GM12878 (cell line): ENCODE measurements at regions of chr11 and their contacts with region 1.

Region 1: GRCh38 chr11:43282607-43283440 is 29.0 kb upstream of the API5 start:
- DNase-seq: no peak
- ATAC-seq: peak; percentile 89
- H3K4me3 ChIP-seq: no peak overlapping the region
- H3K27ac ChIP-seq: no peak overlapping the region
- H3K4me1 ChIP-seq: no peaks in the 10 kb centered on the region
- H3K27me3 ChIP-seq: no peaks in the 10 kb centered on the region; a peak in 1 of 4 replicates
- CTCF ChIP-seq: peak; percentile 79 to 84 (median 84)
- EP300 ChIP-seq: no peak
- POLR2A ChIP-seq: no peak
- RAD21 ChIP-seq: peak; percentile 78

Region 2: GRCh38 chr11:42524534-42525227 is 758.1 kb before region 1 on chr11:
- CTCF ChIA-PET with region 1: interaction called, 11 read pairs
- POLR2A ChIA-PET with region 1: no interaction called
- RAD21 ChIA-PET with region 1: interaction called, 7 read pairs
- SMC1A ChIA-PET with region 1: interaction called, 6 read pairs
- in situ Hi-C with region 1: no loop called
- intact Hi-C with region 1: loop called (anchors 5 kb)
- DNase-seq: peak; percentile 5
- ATAC-seq: peak; percentile 96
- H3K4me3 ChIP-seq: no peak overlapping the region
- H3K27ac ChIP-seq: no peak overlapping the region
- H3K4me1 ChIP-seq: no peaks in the 10 kb centered on the region
- H3K27me3 ChIP-seq: no peaks in the 10 kb centered on the region
- CTCF ChIP-seq: peak; percentile 72 to 85 (median 77)
- EP300 ChIP-seq: no peak
- POLR2A ChIP-seq: no peak
- RAD21 ChIP-seq: peak; percentile 89

Region 3: DNA sequence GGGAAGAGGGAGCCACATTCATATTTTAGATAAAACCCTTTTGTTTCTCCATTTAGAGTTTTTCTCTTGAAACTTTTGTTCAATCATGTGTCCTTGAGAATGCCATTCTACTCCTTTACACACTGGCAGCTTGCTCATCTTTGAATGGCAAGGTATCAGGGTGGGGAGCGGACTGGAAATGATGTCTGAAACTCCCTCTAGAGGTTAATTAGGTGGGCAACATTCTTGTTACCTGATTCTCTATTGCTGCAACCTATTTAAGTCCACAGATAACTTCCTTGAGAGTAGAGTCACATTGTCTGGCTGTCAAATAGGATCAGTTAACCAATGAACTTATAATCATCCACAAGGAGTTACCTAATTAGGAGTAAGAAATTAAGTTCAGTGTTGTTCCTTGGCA is 504.6 kb before region 1 on chr11:
- CTCF ChIA-PET with region 1: interaction called, 15 read pairs
- POLR2A ChIA-PET with region 1: no interaction called
- RAD21 ChIA-PET with region 1: interaction called, 3 read pairs
- SMC1A ChIA-PET with region 1: interaction called, 5 read pairs
- in situ Hi-C with region 1: loop called (anchors 5 kb)
- intact Hi-C with region 1: no loop called
- DNase-seq: no peak
- ATAC-seq: no peak
- H3K4me3 ChIP-seq: no peak overlapping the region
- H3K27ac ChIP-seq: no peak overlapping the region
- H3K4me1 ChIP-seq: no peaks in the 10 kb centered on the region
- H3K27me3 ChIP-seq: no peaks in the 10 kb centered on the region
- CTCF ChIP-seq: no peak
- EP300 ChIP-seq: no peak
- POLR2A ChIP-seq: no peak
- RAD21 ChIP-seq: no peak

Region 4: DNA sequence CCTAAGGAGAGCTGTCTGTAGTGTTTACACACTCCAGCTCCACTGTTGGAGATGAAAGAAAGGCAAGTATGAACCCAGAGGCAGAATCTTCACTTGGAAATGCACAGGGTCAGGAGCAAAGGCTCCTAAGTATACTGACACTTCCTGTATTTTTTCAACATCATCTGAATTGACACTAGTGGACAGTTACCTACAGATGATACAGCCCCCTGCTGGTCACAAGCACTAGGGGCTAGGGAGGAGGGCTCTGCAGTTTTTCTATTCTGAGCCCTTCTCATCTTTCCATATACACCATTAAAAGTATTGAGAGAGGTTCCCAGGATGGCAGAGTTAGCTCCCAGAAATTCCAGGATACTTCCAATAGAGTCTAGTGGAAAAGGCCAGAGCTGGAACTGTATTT is 261.4 kb before region 1 on chr11:
- CTCF ChIA-PET with region 1: interaction called, 14 read pairs
- POLR2A ChIA-PET with region 1: no interaction called
- RAD21 ChIA-PET with region 1: interaction called, 6 read pairs
- SMC1A ChIA-PET with region 1: interaction called, 4 read pairs
- in situ Hi-C with region 1: no loop called
- intact Hi-C with region 1: no loop called
- DNase-seq: no peak
- ATAC-seq: peak; percentile 96
- H3K4me3 ChIP-seq: no peak overlapping the region
- H3K27ac ChIP-seq: no peak overlapping the region
- H3K4me1 ChIP-seq: no peaks in the 10 kb centered on the region
- H3K27me3 ChIP-seq: no peaks in the 10 kb centered on the region
- CTCF ChIP-seq: peak; percentile 31 to 55 (median 48); a peak in 3 of 6 replicates
- EP300 ChIP-seq: no peak
- POLR2A ChIP-seq: no peak
- RAD21 ChIP-seq: peak; percentile 28; the same call in 1 of the 2 replicates

Region 5: DNA sequence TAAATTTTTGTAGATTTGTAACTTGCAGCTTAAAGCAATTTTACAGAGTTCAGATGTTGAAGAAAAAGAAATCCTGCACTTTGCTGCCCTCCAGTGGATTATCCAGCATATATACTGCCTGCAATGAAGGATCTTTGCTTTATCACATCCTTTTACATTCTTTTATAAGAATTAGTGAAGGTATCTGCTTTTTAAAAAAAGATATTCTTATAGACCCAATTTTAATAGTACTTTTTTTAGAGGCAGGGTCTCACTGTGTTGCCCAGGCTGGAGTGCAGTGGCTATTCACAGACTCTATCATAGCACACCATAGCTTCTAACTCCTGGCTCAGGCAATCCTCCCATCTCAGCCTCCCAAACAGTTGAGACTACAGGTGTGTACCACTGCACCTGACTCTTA is 136.6 kb after region 1 on chr11:
- CTCF ChIA-PET with region 1: interaction called, 9 read pairs
- POLR2A ChIA-PET with region 1: no interaction called
- RAD21 ChIA-PET with region 1: interaction called, 4 read pairs
- SMC1A ChIA-PET with region 1: interaction called, 18 read pairs
- in situ Hi-C with region 1: no loop called
- intact Hi-C with region 1: no loop called
- DNase-seq: no peak
- ATAC-seq: peak; percentile 87
- H3K4me3 ChIP-seq: no peak overlapping the region
- H3K27ac ChIP-seq: no peak overlapping the region
- H3K4me1 ChIP-seq: no peaks in the 10 kb centered on the region
- H3K27me3 ChIP-seq: no peaks in the 10 kb centered on the region
- CTCF ChIP-seq: peak; percentile 56 to 69 (median 67)
- EP300 ChIP-seq: no peak
- POLR2A ChIP-seq: no peak
- RAD21 ChIP-seq: peak; percentile 73

Region 6: GRCh38 chr11:43547889-43548381 is 265.1 kb after region 1 on chr11:
- CTCF ChIA-PET with region 1: no interaction called
- POLR2A ChIA-PET with region 1: no interaction called
- RAD21 ChIA-PET with region 1: no interaction called
- SMC1A ChIA-PET with region 1: no interaction called
- in situ Hi-C with region 1: no loop called
- intact Hi-C with region 1: no loop called
- DNase-seq: no peak
- ATAC-seq: no peak
- H3K4me3 ChIP-seq: no peak overlapping the region
- H3K27ac ChIP-seq: no peak overlapping the region
- H3K4me1 ChIP-seq: peaks cover under 1% of the 10 kb centered on the region; the same call in 1 of the 2 replicates
- H3K27me3 ChIP-seq: peaks cover under 1 to 6% of the 10 kb centered on the region in 2 experiments
- CTCF ChIP-seq: no peak
- EP300 ChIP-seq: no peak
- POLR2A ChIP-seq: no peak
- RAD21 ChIP-seq: no peak